Tibial artery (tissue), 4 donors: ENCODE measurements at regions of chr7 and their contacts with region 1.

Region 1: DNA sequence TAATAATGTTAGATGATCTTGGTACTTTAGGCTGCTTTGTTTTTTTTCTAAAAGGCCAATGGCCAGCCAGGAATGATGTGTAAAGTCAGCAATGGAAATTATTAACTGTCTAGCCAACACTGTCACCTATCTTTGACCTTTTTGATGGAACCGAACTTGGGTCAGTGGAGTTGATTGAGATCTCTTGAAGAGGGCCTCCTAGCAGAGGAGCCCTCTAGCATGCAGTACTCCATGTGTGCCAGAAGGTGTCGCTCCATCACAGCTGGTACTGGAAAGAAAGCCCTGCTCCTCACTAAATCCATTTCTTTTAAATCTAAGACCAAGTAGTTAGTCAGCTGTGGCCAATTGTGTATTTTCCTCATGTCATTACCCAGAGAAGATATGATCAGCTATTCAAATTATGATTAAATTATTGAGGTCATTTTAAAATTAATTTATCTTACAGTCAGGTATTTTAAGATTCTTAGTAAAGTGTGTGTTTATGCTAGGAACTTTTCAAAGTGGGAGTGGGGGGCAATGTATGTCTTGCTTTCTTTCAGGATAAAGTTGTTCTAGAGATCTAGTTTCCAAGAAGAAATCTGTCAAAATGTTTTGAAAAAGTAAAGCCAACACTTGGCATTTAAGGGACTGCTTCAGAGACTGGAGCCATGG is 33.1 kb upstream of the CROT start:
- DNase-seq: no peak
- H3K4me3 ChIP-seq: no peak overlapping the region
- H3K27ac ChIP-seq: no peak overlapping the region
- H3K4me1 ChIP-seq: no peaks in the 10 kb centered on the region
- H3K27me3 ChIP-seq: no peaks in the 10 kb centered on the region
- CTCF ChIP-seq: peak; percentile 93 to 97

Region 2: GRCh38 chr7:87413951-87414799 is 101.8 kb after region 1 on chr7:
- intact Hi-C with region 1: loop called (anchors 2 kb)
- DNase-seq: no peak
- H3K4me3 ChIP-seq: no peak overlapping the region
- H3K27ac ChIP-seq: peak overlapping the region in 1 of 2 donors; percentile 25
- H3K4me1 ChIP-seq: peaks cover 0 to 23% (median 5%) of the 10 kb centered on the region in 4 donors
- H3K27me3 ChIP-seq: no peaks in the 10 kb centered on the region
- CTCF ChIP-seq: no peak